Psoas muscle (tissue), 8 donors: ENCODE measurements at regions of chr7 and their contacts with region 1.

Region 1: GRCh38 chr7:83798489-83798888 is 149.6 kb upstream of the SEMA3E start:
- DNase-seq: no peak
- ATAC-seq: no peak
- H3K4me3 ChIP-seq: no peak overlapping the region
- H3K27ac ChIP-seq: no peak overlapping the region
- H3K4me1 ChIP-seq: no peaks in the 10 kb centered on the region
- H3K27me3 ChIP-seq: no peaks in the 10 kb centered on the region
- CTCF ChIP-seq: no peak

Region 2: DNA sequence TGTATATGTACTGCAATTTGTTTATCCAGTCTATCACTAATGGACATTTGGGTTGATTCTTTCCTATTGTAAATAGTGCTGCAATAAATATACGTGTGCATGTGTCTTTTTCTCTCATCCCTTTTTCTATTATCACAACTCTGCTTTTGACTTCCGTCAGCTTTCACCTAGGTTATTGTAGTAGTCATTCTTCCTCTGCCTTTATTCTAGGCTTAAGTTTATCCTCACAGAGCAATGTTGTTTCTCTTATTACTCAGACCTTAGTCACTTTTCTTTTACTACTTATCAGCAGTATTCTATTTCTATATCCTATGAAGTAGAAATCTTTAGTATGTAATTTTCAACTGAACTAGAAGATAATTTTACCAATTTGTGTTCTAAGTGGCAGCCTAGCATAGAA is 25.7 kb after region 1 on chr7:
- intact Hi-C with region 1: loop called in 1 of 2 experiments (anchors 1 kb)
- DNase-seq: no peak
- ATAC-seq: no peak
- H3K4me3 ChIP-seq: no peak overlapping the region
- H3K27ac ChIP-seq: no peak overlapping the region
- H3K4me1 ChIP-seq: no peaks in the 10 kb centered on the region
- H3K27me3 ChIP-seq: no peaks in the 10 kb centered on the region
- CTCF ChIP-seq: no peak